Astrocyte of the cerebellum (primary cell): ENCODE measurements at regions of chr7 and their contacts with region 1.

Region 1: GRCh38 chr7:55423277-55423711 is 58.2 kb downstream of the LANCL2 start:
- DNase-seq: no peak
- H3K4me3 ChIP-seq: no peak overlapping the region
- CTCF ChIP-seq: peak; percentile 54

Region 2: DNA sequence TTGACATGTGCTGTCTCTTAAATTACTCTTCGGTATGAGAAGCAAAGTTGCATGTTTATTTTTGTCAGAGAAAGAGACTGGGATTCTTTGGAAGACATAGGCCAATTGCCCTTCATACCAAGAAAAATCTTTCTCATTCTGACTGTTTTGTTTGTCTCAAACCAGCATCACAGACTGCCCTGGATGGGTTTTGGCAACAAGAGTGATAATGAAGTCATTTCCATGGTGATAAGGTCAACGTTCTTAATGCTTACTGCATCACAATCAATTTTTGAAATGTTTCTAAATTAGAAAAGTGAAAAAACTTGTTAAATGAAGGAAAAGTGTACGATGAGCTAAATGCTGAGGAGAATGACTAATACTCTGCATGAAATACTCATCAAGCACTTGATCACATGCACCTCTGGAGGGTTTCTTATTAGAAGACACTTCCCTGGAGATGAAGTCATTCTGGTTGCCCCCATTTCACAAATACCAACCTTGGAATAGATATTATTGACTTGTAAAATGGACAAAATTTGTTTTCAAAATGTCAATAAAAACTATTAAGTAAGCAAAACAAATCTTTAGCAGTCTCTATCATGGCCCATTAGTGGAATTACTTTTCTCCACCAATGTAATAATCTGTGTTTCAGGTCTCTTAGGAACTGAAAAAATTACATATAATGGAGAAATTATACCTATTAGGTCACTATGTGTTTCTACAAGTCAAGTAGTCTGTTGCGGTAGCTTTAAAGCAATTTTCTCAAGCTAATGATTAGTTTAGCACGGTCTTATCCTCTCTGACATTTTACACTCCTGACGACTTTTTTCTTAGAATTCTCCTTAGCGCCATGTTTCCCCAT is 644.4 kb before region 1 on chr7:
- in situ Hi-C with region 1: loop called (anchors 5 kb)
- DNase-seq: no peak
- H3K4me3 ChIP-seq: no peak overlapping the region
- CTCF ChIP-seq: no peak

Region 3: GRCh38 chr7:55177589-55178261 is 245.6 kb before region 1 on chr7:
- in situ Hi-C with region 1: no loop called
- DNase-seq: peak; percentile 93
- H3K4me3 ChIP-seq: no peak overlapping the region
- CTCF ChIP-seq: no peak

Region 4: DNA sequence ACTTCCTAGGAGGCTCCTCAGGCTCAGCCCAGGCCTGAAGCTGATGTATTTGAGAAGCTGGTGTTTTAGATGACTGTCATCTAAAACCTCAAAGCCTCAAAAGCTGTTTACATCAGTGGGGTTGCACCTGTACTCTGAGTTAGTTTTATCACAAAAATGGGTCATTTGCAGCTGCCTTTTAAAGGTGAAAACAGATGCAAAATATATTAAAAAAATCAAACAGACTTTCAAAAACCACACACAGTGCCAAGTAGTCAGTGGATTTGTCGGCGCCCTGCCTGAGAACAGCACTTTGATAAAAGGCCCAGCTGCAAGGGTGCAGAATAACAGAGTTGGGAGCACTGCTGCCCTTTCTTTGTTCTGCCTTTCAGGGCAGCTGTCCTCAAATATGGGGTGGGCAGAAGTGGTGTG is 46.0 kb after region 1 on chr7:
- in situ Hi-C with region 1: loop called (anchors 5 kb)
- DNase-seq: no peak
- H3K4me3 ChIP-seq: no peak overlapping the region
- CTCF ChIP-seq: no peak

Region 5: DNA sequence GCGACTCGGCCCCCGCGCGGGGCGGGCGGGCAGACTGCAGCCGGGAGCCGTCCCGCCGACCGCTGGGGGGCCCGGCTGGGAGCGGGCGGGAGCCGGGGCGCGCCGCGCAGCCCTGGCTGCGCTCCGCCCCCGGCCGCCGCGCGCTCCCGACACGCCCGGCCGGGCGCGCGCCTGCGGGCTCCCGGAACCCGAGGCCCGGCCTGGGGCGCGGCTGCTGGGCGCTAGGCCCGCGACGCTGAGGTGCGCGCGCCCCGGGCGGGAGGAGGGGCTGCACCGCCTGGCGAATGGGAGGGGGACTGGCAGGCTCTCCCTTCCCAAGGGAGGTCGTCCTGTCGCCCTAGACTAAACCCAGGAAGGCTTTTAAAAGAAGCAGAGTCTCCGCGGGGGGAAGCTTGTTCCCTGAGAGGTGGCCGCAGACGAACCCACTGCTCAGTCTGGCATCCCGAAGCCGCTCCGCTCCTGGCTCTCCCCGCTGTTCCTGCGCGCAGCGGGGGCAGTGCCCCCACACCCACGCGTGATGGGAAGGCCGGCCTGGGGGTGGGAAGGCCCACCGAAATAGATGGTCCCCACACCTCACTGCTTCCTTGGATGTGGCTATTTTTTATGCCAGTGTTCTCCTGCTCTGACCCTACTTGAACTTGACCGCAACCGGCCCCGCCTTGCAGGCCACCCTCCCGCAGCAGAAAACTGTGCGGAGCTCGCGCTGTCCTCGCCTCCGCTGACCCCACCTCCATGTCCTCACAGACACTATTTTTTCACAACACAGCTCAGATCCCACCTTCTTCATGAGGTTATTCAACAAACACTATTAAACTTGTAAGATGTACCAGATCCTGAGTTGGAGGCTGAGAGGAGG is 149.3 kb after region 1 on chr7 and contains the start of gene VOPP1:
- in situ Hi-C with region 1: loop called (anchors 5 kb)
- DNase-seq: no peak
- H3K4me3 ChIP-seq: peak within 1 kb of the TSS; percentile 89
- CTCF ChIP-seq: no peak

Region 6: GRCh38 chr7:56063882-56064625 is 640.8 kb after region 1 on chr7 and contains the start of gene SUMF2:
- in situ Hi-C with region 1: loop called (anchors 10 kb)
- DNase-seq: peak; percentile 56
- H3K4me3 ChIP-seq: peak within 1 kb of the TSS; percentile 79
- CTCF ChIP-seq: peak; percentile 13